Activated CD4-positive, alpha-beta T cell treated with anti-CD3 and anti-CD28 coated beads, Interleukin-2, amount 10 ng/mL, durations not matched to agents 24 days and 14 days (primary cell): ENCODE measurements at regions of chr19 and their contacts with region 1.

Region 1: DNA sequence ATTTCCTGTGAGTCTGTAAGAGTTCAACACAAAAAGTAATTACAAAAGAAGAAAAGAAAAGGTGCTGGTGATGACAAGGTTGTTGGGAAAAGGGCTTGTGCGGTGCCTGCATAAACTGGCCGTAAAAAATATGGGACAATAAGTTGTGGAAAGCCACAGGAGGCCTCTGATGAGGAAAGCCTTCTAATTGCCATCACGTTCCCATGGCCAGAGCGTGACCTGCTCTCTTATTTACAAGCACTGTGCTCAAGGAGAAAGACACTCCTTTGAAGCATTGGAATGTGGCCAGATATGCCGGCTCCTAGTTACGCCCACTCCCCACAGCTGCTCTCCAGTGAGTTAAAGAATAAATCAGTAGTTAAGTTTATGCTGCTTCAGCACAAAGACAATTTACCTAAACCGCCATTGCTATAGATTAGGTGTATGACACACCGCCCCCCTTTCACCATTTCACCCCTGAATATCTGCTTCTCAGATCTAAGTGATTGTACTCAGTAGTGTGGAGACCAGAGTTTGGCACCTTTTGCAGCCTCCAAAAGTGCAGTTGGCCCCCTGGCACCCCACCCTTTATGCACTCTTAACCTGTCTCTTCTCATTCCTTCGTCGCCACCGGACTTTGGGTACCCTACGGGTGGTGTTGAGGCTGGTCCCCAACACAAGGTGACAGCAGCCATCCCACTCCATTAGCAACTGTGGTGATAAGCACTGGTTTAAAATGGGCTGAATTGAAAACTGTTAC is 8.1 kb upstream of the PGLYRP1 start:
- DNase-seq: no peak
- H3K4me3 Mint-ChIP-seq: no peak overlapping the region
- H3K27ac Mint-ChIP-seq: no peak overlapping the region
- H3K4me1 Mint-ChIP-seq: peaks cover 10% of the 10 kb centered on the region
- H3K27me3 Mint-ChIP-seq: peaks cover 25% of the 10 kb centered on the region

Region 2: GRCh38 chr19:46218160-46218559 is 187.2 kb after region 1 on chr19:
- intact Hi-C with region 1: no loop called
- DNase-seq: peak; percentile 81
- H3K4me3 Mint-ChIP-seq: no peak overlapping the region
- H3K27ac Mint-ChIP-seq: no peak overlapping the region
- H3K4me1 Mint-ChIP-seq: no peaks in the 10 kb centered on the region
- H3K27me3 Mint-ChIP-seq: peaks cover 3% of the 10 kb centered on the region

Region 3: DNA sequence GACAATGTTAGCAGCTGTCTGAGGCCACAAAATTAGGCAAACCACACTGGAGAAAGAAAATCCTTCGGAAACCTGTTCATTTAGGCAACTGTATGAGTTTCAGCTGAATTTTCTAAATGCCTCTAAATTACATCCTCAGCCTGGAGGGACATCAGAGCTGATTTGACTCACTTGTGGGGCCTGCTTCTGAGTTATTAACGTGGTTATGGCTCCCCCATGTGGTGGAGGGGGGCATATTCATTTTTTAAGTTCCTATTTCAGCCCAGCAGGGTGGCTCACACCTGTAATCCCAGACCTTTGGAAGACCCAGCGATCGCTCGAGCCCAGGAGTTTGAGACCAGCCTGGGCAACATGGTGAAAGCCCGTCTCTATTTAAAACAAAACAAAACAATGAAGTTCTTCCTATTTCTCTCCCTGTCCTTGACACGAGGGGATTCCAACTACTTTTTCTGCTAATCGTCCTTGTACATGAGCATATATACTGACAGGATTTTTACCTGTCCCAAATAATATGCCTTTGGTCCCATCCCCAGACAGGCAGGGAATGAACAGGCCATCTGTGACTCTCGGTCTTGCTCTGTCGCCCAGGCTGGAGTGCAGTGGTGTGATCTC is 234.3 kb after region 1 on chr19:
- intact Hi-C with region 1: loop called (anchors 1 kb)
- DNase-seq: peak; percentile 91
- H3K4me3 Mint-ChIP-seq: no peak overlapping the region
- H3K27ac Mint-ChIP-seq: no peak overlapping the region
- H3K4me1 Mint-ChIP-seq: peaks cover 10% of the 10 kb centered on the region
- H3K27me3 Mint-ChIP-seq: peaks cover 57% of the 10 kb centered on the region